ENCODE measurements at regions of chr4 and their contacts with region 1.

Region 1: GRCh38 chr4:107987916-107988762 is 1.6 kb upstream of the HADH start:
- DNase-seq: no peak
- ATAC-seq: no peak
- H3K4me3 ChIP-seq: no peak overlapping the region
- H3K4me3 Mint-ChIP-seq: peak overlapping the region in 2 of 3 donors; percentile 13 to 95
- H3K27ac ChIP-seq: peak overlapping the region; percentile 46
- H3K27ac Mint-ChIP-seq: no peak overlapping the region
- H3K4me1 ChIP-seq: peaks cover 12 to 17% of the 10 kb centered on the region in 2 experiments
- H3K4me1 Mint-ChIP-seq: peaks cover 45 to 49% (median 48%) of the 10 kb centered on the region in 3 donors
- H3K27me3 ChIP-seq: no peaks in the 10 kb centered on the region
- H3K27me3 Mint-ChIP-seq: no peaks in the 10 kb centered on the region

Region 2: GRCh38 chr4:109389369-109390114 is 1401.4 kb after region 1 on chr4:
- CTCF ChIA-PET with region 1: no interaction called
- POLR2A ChIA-PET with region 1: no interaction called
- DNase-seq: no peak
- ATAC-seq: no peak
- H3K4me3 ChIP-seq: no peak overlapping the region
- H3K4me3 Mint-ChIP-seq: no peak overlapping the region
- H3K27ac ChIP-seq: no peak overlapping the region
- H3K27ac Mint-ChIP-seq: no peak overlapping the region
- H3K4me1 ChIP-seq: no peaks in the 10 kb centered on the region
- H3K4me1 Mint-ChIP-seq: no peaks in the 10 kb centered on the region
- H3K27me3 ChIP-seq: peaks cover 0 to 9% of the 10 kb centered on the region in 2 experiments
- H3K27me3 Mint-ChIP-seq: peaks cover 9 to 15% of the 10 kb centered on the region in 2 donors

Region 3: GRCh38 chr4:109803924-109804571 is 1815.9 kb after region 1 on chr4:
- CTCF ChIA-PET with region 1: interaction called in 1 of 2 experiments, 13 read pairs
- POLR2A ChIA-PET with region 1: no interaction called
- DNase-seq: peak in 5 of 35 experiments; percentile 2 to 59 (median 6)
- ATAC-seq: peak in 2 of 4 experiments; percentile 40 to 43
- H3K4me3 ChIP-seq: no peak overlapping the region
- H3K4me3 Mint-ChIP-seq: no peak overlapping the region
- H3K27ac ChIP-seq: no peak overlapping the region
- H3K27ac Mint-ChIP-seq: no peak overlapping the region
- H3K4me1 ChIP-seq: no peaks in the 10 kb centered on the region
- H3K4me1 Mint-ChIP-seq: no peaks in the 10 kb centered on the region
- H3K27me3 ChIP-seq: no peaks in the 10 kb centered on the region
- H3K27me3 Mint-ChIP-seq: peaks cover 5 to 8% of the 10 kb centered on the region in 2 donors

Measured in T-cell (primary cell).